ENCODE measurements at regions of chr1 and their contacts with region 1.

Region 1: DNA sequence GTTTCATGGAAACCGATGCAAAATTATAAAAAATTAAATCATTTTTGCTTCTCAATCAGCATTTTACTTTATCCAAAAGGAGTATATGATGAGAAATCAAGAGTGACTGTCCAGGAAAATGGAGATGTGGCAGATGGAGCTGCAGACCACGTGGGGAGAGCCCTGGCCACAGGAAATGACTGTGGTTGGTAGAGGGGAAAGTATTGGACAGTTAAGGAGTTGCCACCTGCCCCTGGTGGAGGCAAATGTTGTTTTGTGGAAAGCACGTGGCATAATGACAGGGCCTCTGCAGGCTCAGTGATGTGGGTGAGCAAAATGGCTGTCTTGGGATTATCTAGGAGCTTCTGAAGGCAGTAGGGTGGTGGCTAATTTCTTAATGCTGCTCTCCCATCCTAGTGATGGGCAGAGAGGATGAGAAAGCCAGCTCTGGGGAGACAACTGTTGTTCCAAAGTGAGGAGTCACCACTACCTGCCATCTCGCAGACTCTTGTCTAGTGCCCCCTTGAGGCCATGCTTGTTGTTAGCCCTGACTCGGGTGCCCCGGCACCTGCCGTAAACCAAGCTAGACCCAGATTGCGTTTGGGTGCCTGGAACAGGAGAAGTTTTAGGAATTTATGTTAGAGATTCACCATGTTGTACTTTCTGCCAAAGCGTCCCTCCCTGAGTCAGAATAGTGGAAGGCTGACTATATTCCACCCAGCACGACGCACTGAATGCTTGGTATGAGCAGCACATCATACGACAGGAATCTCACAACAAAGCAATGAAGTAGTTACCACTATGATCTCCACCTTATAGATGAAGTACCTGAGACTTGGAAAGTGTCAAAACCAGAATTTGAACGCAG is 144.0 kb downstream of the ROR1 start:
- DNase-seq: no peak
- ATAC-seq: no peak
- H3K4me3 Mint-ChIP-seq: no peak overlapping the region
- H3K27ac Mint-ChIP-seq: no peak overlapping the region
- H3K4me1 Mint-ChIP-seq: no peaks in the 10 kb centered on the region
- H3K27me3 Mint-ChIP-seq: peaks cover 14% of the 10 kb centered on the region
- CTCF ChIP-seq: no peak

Region 2: DNA sequence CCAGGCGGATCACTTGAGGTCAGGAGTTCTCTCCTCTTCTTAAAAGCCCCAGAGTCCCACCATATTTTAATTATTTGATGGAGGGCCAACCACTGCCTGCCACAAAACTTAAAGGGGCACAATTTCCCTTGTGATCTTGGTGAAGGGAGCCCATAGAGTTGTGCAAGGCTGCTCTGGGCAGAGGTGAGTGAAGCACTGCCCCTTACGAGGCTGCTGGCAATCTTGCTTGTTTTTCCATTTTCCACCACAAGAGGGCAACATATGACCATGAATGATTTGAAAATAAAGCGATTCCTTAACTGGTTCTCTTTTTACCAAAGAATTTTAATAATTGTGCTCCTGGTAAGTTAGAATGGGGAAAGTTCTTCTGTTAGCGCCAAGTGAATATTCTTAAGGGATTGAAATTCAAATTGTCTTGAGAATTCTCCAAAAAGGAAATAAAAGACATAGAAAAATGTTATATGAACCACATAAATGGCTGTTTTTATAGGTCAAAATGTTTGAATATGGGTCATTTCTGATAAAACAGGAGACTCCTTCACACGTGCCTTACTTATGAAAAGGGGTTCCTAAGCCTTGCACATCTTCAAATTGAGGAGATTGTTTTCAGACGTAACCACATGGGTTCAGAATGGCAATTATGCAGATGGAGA is 301.9 kb before region 1 on chr1:
- CTCF ChIA-PET with region 1: interaction called, 6 read pairs
- POLR2A ChIA-PET with region 1: no interaction called
- intact Hi-C with region 1: loop called (anchors 1 kb)
- DNase-seq: no peak
- ATAC-seq: peak; percentile 66
- H3K4me3 Mint-ChIP-seq: no peak overlapping the region
- H3K27ac Mint-ChIP-seq: no peak overlapping the region
- H3K4me1 Mint-ChIP-seq: no peaks in the 10 kb centered on the region
- H3K27me3 Mint-ChIP-seq: no peaks in the 10 kb centered on the region
- CTCF ChIP-seq: no peak

Region 3: GRCh38 chr1:63705078-63705477 is 212.7 kb before region 1 on chr1:
- CTCF ChIA-PET with region 1: interaction called, 4 read pairs
- POLR2A ChIA-PET with region 1: no interaction called
- intact Hi-C with region 1: loop called (anchors 5 kb)
- DNase-seq: no peak
- ATAC-seq: no peak
- H3K4me3 Mint-ChIP-seq: no peak overlapping the region
- H3K27ac Mint-ChIP-seq: no peak overlapping the region
- H3K4me1 Mint-ChIP-seq: peaks cover 1% of the 10 kb centered on the region
- H3K27me3 Mint-ChIP-seq: peaks cover 13% of the 10 kb centered on the region
- CTCF ChIP-seq: no peak

Region 4: DNA sequence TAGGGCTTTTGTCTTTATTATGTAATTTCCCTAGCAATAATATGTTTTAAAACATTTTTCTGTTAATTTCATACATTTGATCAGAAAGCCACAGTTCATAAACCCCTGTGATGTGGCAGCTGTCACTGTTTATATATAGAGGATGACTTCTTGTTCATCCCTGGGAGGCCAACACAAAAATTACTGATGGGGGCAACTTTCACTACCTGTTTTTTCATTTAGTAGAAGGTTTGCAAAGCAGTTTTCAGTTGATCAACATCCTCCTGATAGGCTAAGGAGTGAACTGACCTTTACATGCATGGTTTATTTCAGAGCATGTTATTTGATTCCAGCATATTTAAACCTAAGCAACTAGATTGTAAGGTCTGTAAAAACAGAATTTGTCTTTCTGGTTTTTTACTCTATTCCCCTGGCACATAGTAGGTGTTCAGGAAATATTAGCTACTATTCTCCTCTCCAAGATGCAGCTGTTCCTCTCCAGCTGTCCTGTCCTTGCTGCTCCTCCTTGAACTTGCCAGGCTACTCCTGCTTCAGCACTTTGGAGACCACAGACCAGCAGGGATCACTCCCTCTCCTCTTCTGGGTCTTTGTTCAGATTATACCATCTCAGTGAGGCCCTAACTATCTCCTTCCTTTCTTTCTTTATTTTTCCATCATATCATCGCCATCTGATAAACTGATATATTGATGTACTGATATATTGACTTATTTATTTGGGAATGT is 89.3 kb before region 1 on chr1:
- CTCF ChIA-PET with region 1: no interaction called
- POLR2A ChIA-PET with region 1: no interaction called
- intact Hi-C with region 1: loop called (anchors 5 kb)
- DNase-seq: no peak
- ATAC-seq: peak; percentile 86
- H3K4me3 Mint-ChIP-seq: no peak overlapping the region
- H3K27ac Mint-ChIP-seq: peak overlapping the region; percentile 20
- H3K4me1 Mint-ChIP-seq: peaks cover 46% of the 10 kb centered on the region
- H3K27me3 Mint-ChIP-seq: no peaks in the 10 kb centered on the region
- CTCF ChIP-seq: no peak

Region 5: DNA sequence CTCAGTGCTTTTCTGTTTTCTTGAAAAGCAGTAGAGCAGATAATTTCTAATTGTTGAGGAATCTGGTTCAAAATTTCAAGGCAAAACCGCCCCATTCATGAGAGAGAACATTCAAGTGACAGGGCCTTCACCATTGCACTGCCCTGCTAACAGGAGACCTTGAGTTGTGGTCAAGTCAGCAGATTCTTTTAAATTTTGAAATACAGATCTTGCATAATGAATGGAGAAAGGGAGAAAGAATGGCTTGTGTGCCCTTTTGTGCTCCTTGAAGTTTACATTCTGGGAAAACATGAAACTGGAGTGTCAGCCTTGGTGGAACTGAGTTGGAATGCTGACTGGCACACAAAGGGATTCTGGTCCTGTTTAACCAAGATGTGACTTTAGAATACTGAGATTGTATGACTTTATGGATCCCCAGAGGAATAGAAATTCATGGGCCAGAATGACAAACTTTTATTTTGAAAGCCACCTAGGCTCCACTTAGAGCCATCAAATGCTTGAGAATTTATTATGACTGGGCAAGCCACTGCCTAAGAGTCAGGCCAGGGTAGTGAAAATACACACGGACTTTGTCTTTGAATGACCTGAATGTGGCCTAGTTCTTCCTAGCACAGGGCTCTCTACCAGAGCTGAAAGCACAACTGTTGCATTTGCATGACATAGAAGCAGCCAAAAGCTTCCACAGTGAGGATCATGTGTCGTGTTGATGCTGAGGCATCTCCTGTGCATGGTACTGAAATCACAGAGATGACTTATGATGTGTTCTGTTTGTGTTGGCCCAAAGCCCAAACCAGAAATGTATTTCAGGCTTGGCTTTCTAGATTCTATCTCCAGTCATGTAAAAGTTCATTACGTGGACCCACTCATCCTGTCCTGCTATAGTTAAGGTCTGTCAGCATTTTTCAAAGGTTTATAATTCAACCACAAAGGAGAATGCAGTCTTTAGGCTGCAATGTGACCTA is 121.5 kb after region 1 on chr1:
- CTCF ChIA-PET with region 1: no interaction called
- POLR2A ChIA-PET with region 1: no interaction called
- intact Hi-C with region 1: no loop called
- DNase-seq: no peak
- ATAC-seq: no peak
- H3K4me3 Mint-ChIP-seq: no peak overlapping the region
- H3K27ac Mint-ChIP-seq: no peak overlapping the region
- H3K4me1 Mint-ChIP-seq: no peaks in the 10 kb centered on the region
- H3K27me3 Mint-ChIP-seq: peaks cover 4% of the 10 kb centered on the region
- CTCF ChIP-seq: no peak

Region 6: DNA sequence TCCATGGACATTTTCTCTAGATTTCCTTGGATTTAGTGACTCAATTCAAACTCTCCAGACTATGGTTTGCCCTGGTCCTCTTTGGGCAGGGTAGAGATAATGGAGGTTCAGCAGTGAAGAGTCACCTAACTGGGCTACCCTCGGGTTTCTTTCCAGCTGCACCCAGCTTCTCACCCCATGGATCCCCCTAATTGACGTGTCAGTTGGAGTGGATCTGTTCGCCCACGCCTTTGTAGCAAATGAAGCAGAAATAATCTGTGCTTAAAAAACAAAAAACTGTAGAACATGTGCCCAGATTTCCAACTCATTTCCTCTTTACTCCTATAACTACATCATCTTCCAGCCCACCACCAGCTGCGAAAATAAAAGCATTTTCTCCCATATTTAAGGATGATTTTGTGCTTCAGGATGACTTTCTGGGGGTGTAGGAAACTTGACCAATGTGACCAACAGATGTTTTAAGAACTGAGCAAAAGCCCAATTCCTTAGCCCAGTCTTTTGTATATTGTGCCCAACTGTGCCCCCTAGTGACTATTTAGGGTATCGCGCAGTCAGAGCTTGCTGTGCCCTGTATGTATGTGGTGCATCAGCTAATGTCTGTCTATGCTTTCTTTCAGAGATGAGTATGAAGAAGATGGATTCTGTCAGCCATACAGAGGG is 219.1 kb after region 1 on chr1:
- CTCF ChIA-PET with region 1: interaction called, 4 read pairs
- POLR2A ChIA-PET with region 1: no interaction called
- intact Hi-C with region 1: loop called (anchors 1 kb)
- DNase-seq: peak; percentile 39
- ATAC-seq: peak; percentile 73
- H3K4me3 Mint-ChIP-seq: no peak overlapping the region
- H3K27ac Mint-ChIP-seq: no peak overlapping the region
- H3K4me1 Mint-ChIP-seq: no peaks in the 10 kb centered on the region
- H3K27me3 Mint-ChIP-seq: peaks cover 5% of the 10 kb centered on the region
- CTCF ChIP-seq: peak; percentile 34

Measured in activated B cell treated with CpG ODN at 0.5 μM for 24 hours (primary cell).